Aorta (tissue), 5 donors: ENCODE measurements at regions of chr9 and their contacts with region 1.

Region 1: DNA sequence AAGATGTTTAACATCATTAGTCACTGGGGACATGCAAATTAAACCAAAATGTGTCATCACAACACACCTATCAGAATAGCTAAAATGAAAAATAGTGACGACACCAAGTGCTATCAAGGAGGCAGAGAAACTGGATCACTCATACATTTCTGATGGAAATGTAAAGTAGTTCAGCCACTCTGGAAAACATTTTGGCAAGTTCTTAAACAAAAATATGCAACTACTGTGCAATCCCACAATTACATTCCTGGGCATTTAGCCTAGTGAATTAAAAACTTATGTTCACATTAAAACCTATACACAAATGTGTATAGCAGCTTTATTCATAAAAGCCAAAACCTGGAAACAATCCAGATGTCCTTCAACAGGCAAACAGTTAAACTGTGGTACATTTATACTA is 53.1 kb downstream of the SVEP1 start:
- DNase-seq: no peak
- ATAC-seq: no peak
- H3K4me3 ChIP-seq: no peak overlapping the region
- H3K27ac ChIP-seq: no peak overlapping the region
- H3K4me1 ChIP-seq: peaks cover 0 to 3% of the 10 kb centered on the region in 2 donors
- H3K27me3 ChIP-seq: no peaks in the 10 kb centered on the region

Region 2: DNA sequence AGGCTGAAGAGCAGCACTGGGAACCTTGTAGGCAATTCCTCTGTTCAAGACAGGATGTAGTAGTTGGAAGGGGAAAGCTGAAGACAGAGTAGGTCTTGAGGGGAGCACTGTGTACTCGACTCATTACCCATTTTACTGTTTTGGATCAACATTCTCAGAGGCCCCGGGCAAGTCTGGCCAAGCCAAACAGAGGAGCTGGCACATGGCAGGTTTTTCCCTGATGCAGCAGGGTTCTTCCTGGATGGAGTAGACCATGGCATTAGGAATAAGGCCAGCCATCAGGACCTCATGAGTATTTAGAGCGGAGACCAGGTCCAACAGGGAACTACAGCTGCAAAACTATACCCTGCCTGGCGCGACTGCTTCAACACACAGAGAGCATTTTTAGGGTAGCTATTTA is 48.8 kb after region 1 on chr9:
- intact Hi-C with region 1: loop called in 1 of 2 experiments (anchors 2 kb)
- DNase-seq: peak; percentile 80 to 83
- ATAC-seq: peak; percentile 63
- H3K4me3 ChIP-seq: no peak overlapping the region
- H3K27ac ChIP-seq: peak overlapping the region in 1 of 2 donors; percentile 56
- H3K4me1 ChIP-seq: no peaks in the 10 kb centered on the region
- H3K27me3 ChIP-seq: no peaks in the 10 kb centered on the region

Region 3: GRCh38 chr9:111236332-111236731 is 709.9 kb after region 1 on chr9:
- intact Hi-C with region 1: no loop called
- DNase-seq: no peak
- ATAC-seq: no peak
- H3K4me3 ChIP-seq: no peak overlapping the region
- H3K27ac ChIP-seq: no peak overlapping the region
- H3K4me1 ChIP-seq: no peaks in the 10 kb centered on the region
- H3K27me3 ChIP-seq: no peaks in the 10 kb centered on the region